Activated T-helper 2 cell treated with anti-CD3 and anti-CD28 coated beads, Interferon-gamma antibody, Interleukin-2, Interleukin-4, amounts not matched to agents 10 μg/mL and 5 μg/mL and 100 μg/mL, durations not matched to agents 14 hours and 24 hours and 36 hours (primary cell): ENCODE measurements at regions of chr1 and their contacts with region 1.

Region 1: GRCh38 chr1:43946236-43947060 is at the start of gene IPO13:
- DNase-seq: peak; percentile 95
- H3K4me3 Mint-ChIP-seq: peak within 1 kb of the TSS; percentile 96
- H3K27ac Mint-ChIP-seq: peak within 1 kb of the TSS; percentile 94
- H3K4me1 Mint-ChIP-seq: peaks cover 30% of the 10 kb centered on the region
- H3K27me3 Mint-ChIP-seq: no peaks in the 10 kb centered on the region
- total RNA-seq, gene IPO13: 26.4 and 26.8 TPM in 2 replicates

Region 2: DNA sequence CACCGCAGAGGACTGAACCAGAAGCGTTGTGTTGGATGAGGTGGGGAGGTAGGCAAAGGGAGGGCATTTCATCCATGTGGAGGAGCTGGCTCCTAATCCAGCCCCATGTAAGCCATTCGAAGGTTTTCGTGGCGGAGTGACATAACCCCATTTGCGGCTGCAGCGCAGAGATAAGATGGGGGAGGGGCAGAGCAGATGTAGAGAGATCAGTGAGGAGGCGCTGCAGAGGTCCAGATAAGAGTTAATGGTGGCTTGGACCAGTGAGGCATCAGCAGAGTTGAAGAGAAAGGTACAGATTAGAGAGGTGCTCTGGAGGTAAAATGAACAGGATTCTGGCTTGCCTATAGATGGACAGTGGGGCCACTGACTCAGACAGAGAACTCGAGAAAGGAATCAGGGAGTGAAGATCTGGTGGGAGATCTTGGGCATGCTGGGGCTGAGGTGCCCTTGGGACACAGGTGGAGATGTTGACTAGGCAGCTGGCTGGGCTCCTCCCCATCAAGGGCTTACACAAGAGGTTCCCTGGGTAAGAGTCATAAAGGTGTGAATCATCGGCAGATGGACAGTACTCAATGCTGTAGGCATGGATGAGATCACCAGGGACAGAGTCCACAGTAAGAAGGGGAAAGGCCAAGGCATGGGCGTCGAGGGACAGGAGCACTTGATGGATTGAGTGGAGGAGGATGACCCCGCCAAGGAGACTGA is 423.5 kb before region 1 on chr1:
- intact Hi-C with region 1: loop called (anchors 5 kb)
- DNase-seq: no peak
- H3K4me3 Mint-ChIP-seq: no peak overlapping the region
- H3K27ac Mint-ChIP-seq: no peak overlapping the region
- H3K4me1 Mint-ChIP-seq: peaks cover 2% of the 10 kb centered on the region
- H3K27me3 Mint-ChIP-seq: peaks cover 43% of the 10 kb centered on the region

Region 3: GRCh38 chr1:43650310-43651085 is 295.9 kb before region 1 on chr1:
- intact Hi-C with region 1: loop called (anchors 5 kb)
- DNase-seq: peak; percentile 89
- H3K4me3 Mint-ChIP-seq: peak overlapping the region; percentile 90
- H3K27ac Mint-ChIP-seq: peak overlapping the region; percentile 97
- H3K4me1 Mint-ChIP-seq: peaks cover 29% of the 10 kb centered on the region
- H3K27me3 Mint-ChIP-seq: peaks cover 1% of the 10 kb centered on the region

Region 4: GRCh38 chr1:43706598-43707495 is 239.6 kb before region 1 on chr1:
- intact Hi-C with region 1: loop called (anchors 5 kb)
- DNase-seq: peak; percentile 90
- H3K4me3 Mint-ChIP-seq: peak overlapping the region; percentile 85
- H3K27ac Mint-ChIP-seq: peak overlapping the region; percentile 75
- H3K4me1 Mint-ChIP-seq: peaks cover 44% of the 10 kb centered on the region
- H3K27me3 Mint-ChIP-seq: no peaks in the 10 kb centered on the region

Region 5: GRCh38 chr1:43822040-43822439 is 124.4 kb before region 1 on chr1:
- intact Hi-C with region 1: no loop called
- DNase-seq: no peak
- H3K4me3 Mint-ChIP-seq: no peak overlapping the region
- H3K27ac Mint-ChIP-seq: no peak overlapping the region
- H3K4me1 Mint-ChIP-seq: no peaks in the 10 kb centered on the region
- H3K27me3 Mint-ChIP-seq: no peaks in the 10 kb centered on the region

Region 6: DNA sequence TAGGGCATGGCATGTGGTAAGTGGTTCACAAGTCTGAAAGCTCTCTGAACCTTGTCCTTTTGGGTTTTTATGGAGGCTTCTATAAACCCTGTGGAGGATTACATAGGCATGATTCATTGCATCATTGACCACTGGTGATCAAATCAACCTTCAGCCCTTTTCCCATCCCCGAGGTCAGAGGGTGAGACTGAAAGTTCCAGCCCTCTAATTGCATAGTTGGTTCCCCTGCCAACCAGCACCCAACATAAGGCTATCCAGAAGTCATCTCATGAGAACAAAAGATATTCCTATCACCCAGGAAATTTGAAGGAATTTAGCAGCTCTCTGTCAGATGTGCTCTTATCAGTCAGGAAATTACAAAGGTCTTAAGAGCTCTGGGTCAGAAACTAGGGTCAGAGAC is 102.3 kb before region 1 on chr1:
- intact Hi-C with region 1: no loop called
- DNase-seq: no peak
- H3K4me3 Mint-ChIP-seq: no peak overlapping the region
- H3K27ac Mint-ChIP-seq: no peak overlapping the region
- H3K4me1 Mint-ChIP-seq: peaks cover 12% of the 10 kb centered on the region
- H3K27me3 Mint-ChIP-seq: no peaks in the 10 kb centered on the region

Region 7: GRCh38 chr1:43934101-43934985 is 12.1 kb before region 1 on chr1:
- intact Hi-C with region 1: no loop called
- DNase-seq: peak; percentile 33
- H3K4me3 Mint-ChIP-seq: no peak overlapping the region
- H3K27ac Mint-ChIP-seq: no peak overlapping the region
- H3K4me1 Mint-ChIP-seq: peaks cover 11% of the 10 kb centered on the region
- H3K27me3 Mint-ChIP-seq: peaks cover 10% of the 10 kb centered on the region

Region 8: GRCh38 chr1:43974443-43975248 is 28.2 kb after region 1 on chr1 and contains the start of gene ATP6V0B:
- intact Hi-C with region 1: loop called (anchors 1 kb)
- DNase-seq: peak; percentile 94
- H3K4me3 Mint-ChIP-seq: peak within 1 kb of the TSS; percentile 91
- H3K27ac Mint-ChIP-seq: peak within 1 kb of the TSS; percentile 90
- H3K4me1 Mint-ChIP-seq: peaks cover 49% of the 10 kb centered on the region
- H3K27me3 Mint-ChIP-seq: no peaks in the 10 kb centered on the region
- total RNA-seq, gene ATP6V0B: 156 and 160 TPM in 2 replicates

Region 9: DNA sequence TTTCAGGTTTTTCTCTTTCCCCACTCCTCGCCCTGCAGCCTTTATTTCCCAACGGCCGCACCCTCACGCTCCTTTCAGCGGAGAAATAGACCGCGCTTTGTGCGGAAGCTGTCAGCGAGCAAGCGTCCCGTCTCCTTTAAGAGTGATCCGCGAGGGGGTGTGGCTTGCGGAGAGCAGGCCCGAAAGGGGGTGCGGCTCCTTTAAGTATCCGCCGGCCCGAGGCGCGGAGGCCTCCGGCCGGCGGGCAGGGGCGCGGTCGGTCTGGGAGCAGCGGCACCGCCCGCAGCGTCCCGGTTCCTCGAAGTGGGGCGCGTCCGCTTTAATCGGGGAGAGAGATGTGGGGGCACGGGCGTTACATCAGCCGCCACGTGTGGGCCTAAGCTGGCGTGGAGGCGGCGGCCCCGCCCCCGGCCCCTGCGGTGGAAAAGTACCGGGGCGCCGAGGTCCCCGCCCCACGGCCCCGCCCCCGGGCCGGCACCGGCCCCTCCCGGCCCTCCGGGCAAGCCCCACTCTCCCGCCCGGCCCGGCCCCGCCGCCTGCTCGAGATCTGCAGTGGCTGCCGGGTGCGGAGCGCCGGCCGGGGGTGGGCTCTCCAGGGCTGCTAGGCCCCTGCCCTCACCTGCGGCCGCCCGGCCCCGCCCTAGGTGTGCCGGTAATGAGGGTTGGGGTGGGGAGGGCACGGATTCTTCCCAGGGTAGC is 83.6 kb after region 1 on chr1:
- intact Hi-C with region 1: loop called (anchors 10 kb)
- DNase-seq: peak; percentile 86
- H3K4me3 Mint-ChIP-seq: peak overlapping the region; percentile 90
- H3K27ac Mint-ChIP-seq: peak overlapping the region; percentile 90
- H3K4me1 Mint-ChIP-seq: peaks cover 29% of the 10 kb centered on the region
- H3K27me3 Mint-ChIP-seq: no peaks in the 10 kb centered on the region

Region 10: DNA sequence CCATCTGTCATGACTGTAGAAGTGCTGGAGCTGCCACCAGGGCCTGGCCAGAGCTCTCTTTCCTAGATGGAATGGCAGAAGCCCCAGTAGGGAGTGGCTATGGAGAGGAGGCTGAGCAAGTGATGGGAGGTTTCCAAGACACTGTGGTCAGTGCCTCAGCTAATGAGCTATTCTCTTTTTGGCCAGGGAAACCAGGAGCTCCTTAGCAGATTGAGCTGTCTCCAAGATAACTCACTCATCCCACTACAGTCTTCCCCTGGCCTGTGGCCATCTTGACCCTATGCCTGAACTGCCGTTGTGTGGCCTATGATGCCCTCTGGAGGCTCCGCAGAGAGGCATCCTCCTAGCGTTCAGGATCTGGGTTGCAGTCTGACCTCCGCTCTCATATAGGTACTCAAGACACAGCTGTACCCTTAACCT is 348.1 kb after region 1 on chr1:
- intact Hi-C with region 1: no loop called
- DNase-seq: no peak
- H3K4me3 Mint-ChIP-seq: no peak overlapping the region
- H3K27ac Mint-ChIP-seq: no peak overlapping the region
- H3K4me1 Mint-ChIP-seq: no peaks in the 10 kb centered on the region
- H3K27me3 Mint-ChIP-seq: no peaks in the 10 kb centered on the region